ENCODE measurements at regions of chr19 and their contacts with region 1.

Region 1: GRCh38 chr19:5251096-5252065 is 89.2 kb downstream of the PTPRS start:
- DNase-seq: no peak
- ATAC-seq: no peak
- H3K4me3 Mint-ChIP-seq: no peak overlapping the region
- H3K27ac Mint-ChIP-seq: no peak overlapping the region
- H3K4me1 Mint-ChIP-seq: no peaks in the 10 kb centered on the region
- H3K27me3 Mint-ChIP-seq: no peaks in the 10 kb centered on the region
- CTCF ChIP-seq: no peak

Region 2: GRCh38 chr19:5138606-5139582 is 112.5 kb before region 1 on chr19:
- CTCF ChIA-PET with region 1: no interaction called
- POLR2A ChIA-PET with region 1: no interaction called
- intact Hi-C with region 1: no loop called
- DNase-seq: peak; percentile 73
- ATAC-seq: peak; percentile 64
- H3K4me3 Mint-ChIP-seq: peak overlapping the region; percentile 70
- H3K27ac Mint-ChIP-seq: peak overlapping the region; percentile 85
- H3K4me1 Mint-ChIP-seq: peaks cover 86% of the 10 kb centered on the region
- H3K27me3 Mint-ChIP-seq: no peaks in the 10 kb centered on the region
- CTCF ChIP-seq: no peak

Region 3: GRCh38 chr19:5205937-5206750 is 45.2 kb before region 1 on chr19:
- CTCF ChIA-PET with region 1: no interaction called
- POLR2A ChIA-PET with region 1: interaction called, 10 read pairs
- intact Hi-C with region 1: no loop called
- DNase-seq: no peak
- ATAC-seq: no peak
- H3K4me3 Mint-ChIP-seq: no peak overlapping the region
- H3K27ac Mint-ChIP-seq: no peak overlapping the region
- H3K4me1 Mint-ChIP-seq: no peaks in the 10 kb centered on the region
- H3K27me3 Mint-ChIP-seq: no peaks in the 10 kb centered on the region
- CTCF ChIP-seq: no peak

Measured in activated B cell treated with CpG ODN at 0.5 μM for 24 hours (primary cell).